Thyroid gland (tissue), 4 donors: ENCODE measurements at regions of chr10 and their contacts with region 1.

Region 1: GRCh38 chr10:84537447-84537931 is 209.1 kb downstream of the CCSER2 start:
- DNase-seq: peak; percentile 73 to 77
- H3K4me3 ChIP-seq: no peak overlapping the region
- H3K27ac ChIP-seq: no peak overlapping the region
- H3K4me1 ChIP-seq: peaks cover 7 to 21% of the 10 kb centered on the region in 2 donors
- H3K27me3 ChIP-seq: no peaks in the 10 kb centered on the region
- CTCF ChIP-seq: peak; percentile 58 to 94 (median 80)
- POLR2A ChIP-seq: no peak

Region 2: GRCh38 chr10:84264611-84265141 is 272.8 kb before region 1 on chr10:
- intact Hi-C with region 1: loop called (anchors 2 kb)
- DNase-seq: peak; percentile 70 to 73
- H3K4me3 ChIP-seq: no peak overlapping the region
- H3K27ac ChIP-seq: no peak overlapping the region
- H3K4me1 ChIP-seq: no peaks in the 10 kb centered on the region
- H3K27me3 ChIP-seq: no peaks in the 10 kb centered on the region
- CTCF ChIP-seq: peak; percentile 75 to 96 (median 90)
- POLR2A ChIP-seq: no peak

Region 3: GRCh38 chr10:84374455-84374854 is 163.0 kb before region 1 on chr10:
- intact Hi-C with region 1: loop called (anchors 5 kb)
- DNase-seq: no peak
- H3K4me3 ChIP-seq: no peak overlapping the region
- H3K27ac ChIP-seq: no peak overlapping the region
- H3K4me1 ChIP-seq: no peaks in the 10 kb centered on the region
- H3K27me3 ChIP-seq: no peaks in the 10 kb centered on the region
- CTCF ChIP-seq: no peak
- POLR2A ChIP-seq: no peak

Region 4: GRCh38 chr10:84600947-84601346 is 63.5 kb after region 1 on chr10:
- intact Hi-C with region 1: loop called (anchors 5 kb)
- DNase-seq: no peak
- H3K4me3 ChIP-seq: no peak overlapping the region
- H3K27ac ChIP-seq: no peak overlapping the region
- H3K4me1 ChIP-seq: peaks cover 0 to 2% of the 10 kb centered on the region in 2 donors
- H3K27me3 ChIP-seq: no peaks in the 10 kb centered on the region
- CTCF ChIP-seq: no peak
- POLR2A ChIP-seq: no peak